CD4-positive, alpha-beta T cell (primary cell): ENCODE measurements at regions of chr12 and their contacts with region 1.

Region 1: DNA sequence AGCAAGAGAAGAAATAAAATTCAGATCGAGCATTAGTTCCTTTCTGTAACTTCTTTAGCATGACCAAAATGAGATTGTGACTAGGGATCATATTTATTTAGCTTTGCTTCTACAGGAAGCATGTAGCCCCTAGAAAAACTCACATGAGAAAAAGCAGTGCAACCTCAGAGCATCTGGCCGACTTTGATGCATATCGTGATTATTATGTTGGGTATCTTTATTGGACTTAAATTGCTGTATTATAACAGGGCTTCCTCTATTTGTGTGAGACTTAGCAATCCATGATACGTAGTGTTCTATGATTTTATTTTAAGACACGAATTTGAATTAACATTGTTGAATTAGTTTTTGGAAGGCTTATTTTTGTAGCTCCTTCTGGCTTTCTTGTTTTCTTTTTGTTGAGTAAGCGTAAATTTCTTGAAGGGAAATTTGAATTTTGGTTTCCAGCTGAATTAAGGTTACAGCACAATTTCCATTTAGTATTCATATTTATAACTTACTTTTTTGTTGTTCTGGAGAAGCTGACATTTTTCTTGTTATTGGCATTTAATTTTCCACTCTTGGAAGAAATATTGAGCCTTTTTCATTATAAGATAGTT is 33.9 kb downstream of the WASHC4 start:
- DNase-seq: no peak
- ATAC-seq: no peak
- H3K4me3 ChIP-seq: no peak overlapping the region
- H3K4me3 Mint-ChIP-seq: no peak overlapping the region
- H3K27ac ChIP-seq: no peak overlapping the region
- H3K27ac Mint-ChIP-seq: no peak overlapping the region
- H3K4me1 ChIP-seq: no peaks in the 10 kb centered on the region
- H3K4me1 Mint-ChIP-seq: peaks cover 15% of the 10 kb centered on the region
- H3K27me3 ChIP-seq: no peaks in the 10 kb centered on the region
- H3K27me3 Mint-ChIP-seq: no peaks in the 10 kb centered on the region
- CTCF ChIP-seq: no peak

Region 2: DNA sequence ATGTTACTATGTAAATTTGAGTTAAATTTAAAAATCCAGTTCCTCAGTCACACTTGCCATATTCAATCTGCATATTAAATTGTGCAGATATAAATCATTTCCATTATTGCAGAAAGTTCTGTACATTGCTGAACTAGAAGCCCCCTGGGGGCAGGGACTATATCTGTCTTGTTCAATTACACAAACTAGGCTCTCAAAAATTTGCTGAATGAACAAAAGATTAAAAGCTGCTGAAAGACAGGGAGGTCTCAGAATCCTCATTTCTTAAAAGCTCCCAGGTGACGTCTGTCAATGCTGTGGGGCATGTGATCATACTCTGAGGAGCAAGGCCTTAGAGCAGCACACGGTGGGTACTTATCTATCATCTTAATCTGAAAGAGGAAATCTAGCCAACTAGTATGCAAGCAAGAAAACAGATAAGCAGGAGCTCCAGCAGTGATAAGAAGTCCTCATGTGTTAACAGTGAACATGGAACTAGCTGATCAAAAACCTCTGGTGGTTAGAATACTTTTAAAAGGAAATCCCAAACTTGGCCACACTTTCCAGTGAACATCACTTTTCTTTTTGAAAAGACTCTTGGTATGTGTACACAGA is 34.1 kb after region 1 on chr12:
- CTCF ChIA-PET with region 1: no interaction called
- POLR2A ChIA-PET with region 1: no interaction called
- intact Hi-C with region 1: loop called in 1 of 2 experiments (anchors 5 kb)
- DNase-seq: no peak
- ATAC-seq: no peak
- H3K4me3 ChIP-seq: no peak overlapping the region
- H3K4me3 Mint-ChIP-seq: no peak overlapping the region
- H3K27ac ChIP-seq: no peak overlapping the region
- H3K27ac Mint-ChIP-seq: peak overlapping the region; percentile 31
- H3K4me1 ChIP-seq: no peaks in the 10 kb centered on the region
- H3K4me1 Mint-ChIP-seq: peaks cover 2% of the 10 kb centered on the region
- H3K27me3 ChIP-seq: no peaks in the 10 kb centered on the region
- H3K27me3 Mint-ChIP-seq: no peaks in the 10 kb centered on the region
- CTCF ChIP-seq: no peak